Heart left ventricle (tissue), 16 donors: ENCODE measurements at regions of chr3 and their contacts with region 1.

Region 1: DNA sequence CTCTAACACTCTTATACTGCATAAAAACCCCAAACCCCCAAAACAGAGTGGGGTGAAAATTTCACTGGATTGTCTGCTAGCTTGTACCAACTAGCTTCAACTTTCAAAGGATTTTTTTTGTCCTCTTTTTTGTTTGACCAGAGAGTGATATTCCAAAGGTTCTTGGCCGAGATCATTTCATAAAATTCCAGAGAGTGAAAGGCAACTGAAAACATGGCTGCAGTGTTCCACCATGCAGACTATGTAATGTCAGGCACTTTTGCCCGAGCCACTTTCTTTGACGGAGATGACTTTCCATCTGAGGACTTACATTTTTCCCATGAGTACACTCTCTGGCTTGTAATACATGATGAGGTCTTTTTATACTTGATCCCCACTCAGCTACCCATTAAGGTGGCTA is 107.5 kb downstream of the TIGIT start:
- DNase-seq: no peak
- ATAC-seq: peak in 2 of 4 donors; percentile 2 to 15
- H3K4me3 ChIP-seq: no peak overlapping the region
- H3K27ac ChIP-seq: peak overlapping the region in 8 of 12 donors; percentile 7 to 81 (median 54)
- H3K4me1 ChIP-seq: peaks cover 3 to 51% (median 30%) of the 10 kb centered on the region in 12 donors
- H3K27me3 ChIP-seq: no peaks in the 10 kb centered on the region
- CTCF ChIP-seq: no peak
- POLR2A ChIP-seq: no peak

Region 2: DNA sequence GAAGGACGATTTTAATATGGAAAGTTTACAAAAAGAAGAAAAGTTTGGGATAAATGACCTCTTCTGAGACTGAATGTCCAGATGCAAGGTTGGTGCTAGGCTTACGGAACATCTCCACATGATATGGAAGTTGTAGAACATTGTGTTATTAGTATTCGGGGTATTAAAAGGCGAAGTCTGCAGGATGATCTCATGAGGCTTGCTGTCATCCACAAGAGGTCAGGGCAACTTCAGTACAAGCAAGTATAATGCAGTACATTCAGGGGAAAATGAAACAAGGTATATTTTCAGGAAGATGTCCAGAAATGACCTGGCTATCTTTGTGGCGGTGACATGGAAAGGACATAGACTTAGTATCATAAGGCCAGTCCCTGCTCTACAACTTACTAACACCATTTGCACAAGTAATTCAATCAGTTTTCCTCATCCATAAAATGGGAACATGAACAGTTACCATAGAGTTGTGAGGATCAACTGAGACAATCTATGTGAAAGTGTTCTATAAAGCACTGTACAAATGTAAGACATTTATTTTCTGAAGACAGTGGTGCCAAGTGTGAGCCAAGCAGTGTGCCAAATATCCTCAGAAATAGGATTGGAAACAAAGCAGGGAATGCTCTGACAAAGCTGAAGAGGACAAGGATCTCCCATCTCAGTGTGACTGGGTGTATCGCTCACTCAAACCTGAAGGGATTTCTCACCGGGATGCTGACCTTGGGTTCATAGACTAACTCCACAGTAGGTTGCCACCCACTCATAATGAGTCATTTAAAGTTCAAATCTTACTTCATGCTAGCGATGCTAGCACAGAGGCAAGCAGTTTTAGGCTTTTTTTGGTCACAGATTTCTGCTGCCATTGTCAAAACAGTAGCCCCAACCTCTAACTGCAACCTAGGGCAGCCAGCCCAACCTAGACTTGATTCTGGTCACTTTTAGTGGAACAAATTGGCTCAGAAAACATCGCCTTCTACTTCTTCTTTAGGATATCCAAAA is 10.8 kb after region 1 on chr3:
- intact Hi-C with region 1: loop called in 1 of 10 experiments (anchors 1 kb)
- DNase-seq: peak in 1 of 5 donors; percentile 8
- ATAC-seq: peak; percentile 39 to 84 (median 68)
- H3K4me3 ChIP-seq: no peak overlapping the region
- H3K27ac ChIP-seq: peak overlapping the region in 11 of 12 donors; percentile 18 to 82 (median 64)
- H3K4me1 ChIP-seq: peaks cover 0 to 84% (median 53%) of the 10 kb centered on the region in 12 donors
- H3K27me3 ChIP-seq: no peaks in the 10 kb centered on the region
- CTCF ChIP-seq: peak in 3 of 12 donors; percentile 10 to 39 (median 32)
- POLR2A ChIP-seq: no peak